Naive thymus-derived CD4-positive, alpha-beta T cell (primary cell): ENCODE measurements at regions of chr1 and their contacts with region 1.

Region 1: GRCh38 chr1:161159087-161159912 is at the start of gene USP21:
- DNase-seq: peak; percentile 86 to 93 (median 91)
- ATAC-seq: peak; percentile 95
- H3K4me3 ChIP-seq: peak within 1 kb of the TSS; percentile 68
- H3K4me3 Mint-ChIP-seq: peak within 1 kb of the TSS; percentile 88 to 94 (median 92)
- H3K27ac ChIP-seq: peak within 1 kb of the TSS; percentile 84
- H3K27ac Mint-ChIP-seq: peak within 1 kb of the TSS; percentile 89 to 97 (median 93)
- H3K4me1 ChIP-seq: peaks cover 31 to 34% of the 10 kb centered on the region in 2 donors
- H3K4me1 Mint-ChIP-seq: peaks cover 35 to 76% (median 67%) of the 10 kb centered on the region in 7 donors
- H3K27me3 ChIP-seq: no peaks in the 10 kb centered on the region
- H3K27me3 Mint-ChIP-seq: no peaks in the 10 kb centered on the region
- total RNA-seq, gene USP21: 36.0 to 66.0 (median 38.6) TPM

Region 2: DNA sequence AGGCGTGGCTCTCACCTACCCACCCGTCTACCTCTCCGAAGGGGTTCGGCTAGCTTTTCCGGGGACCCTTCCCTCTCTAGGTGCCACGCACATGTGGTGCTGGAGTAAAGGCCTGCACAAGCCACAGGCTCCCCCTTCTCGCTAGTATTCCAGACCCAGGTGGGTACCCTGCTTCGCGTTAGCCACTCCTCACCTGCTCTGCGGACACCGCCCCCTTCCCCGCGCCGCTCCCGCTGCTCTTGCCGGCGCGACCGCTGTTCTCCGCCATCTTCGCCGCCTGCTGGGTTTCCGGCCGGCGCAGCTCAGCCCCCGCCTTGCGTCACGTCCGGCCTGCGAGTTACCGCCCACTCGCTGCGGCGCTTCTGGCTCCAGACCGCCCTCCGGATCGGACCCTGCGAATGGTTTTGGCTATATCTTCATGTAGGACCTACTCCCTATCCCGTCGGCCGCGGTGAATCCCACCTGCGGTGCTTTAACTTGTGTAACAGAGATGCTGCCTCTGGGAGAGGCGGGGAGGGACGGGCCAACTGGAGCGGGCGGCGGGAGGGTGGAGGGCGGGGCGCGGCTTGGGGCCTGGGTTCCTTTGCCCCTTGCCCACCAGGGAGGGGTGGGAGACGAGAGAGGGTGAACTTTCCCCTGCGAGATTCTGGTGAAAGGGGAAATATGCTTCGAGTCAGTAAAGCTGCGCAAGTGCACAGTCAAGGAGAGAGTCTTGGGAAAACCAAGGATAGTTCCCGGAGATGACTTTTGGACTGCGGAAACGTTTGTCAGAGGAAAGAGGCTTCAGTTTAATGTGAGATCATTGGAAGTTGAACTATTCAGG is 41.3 kb before region 1 on chr1 and contains the starts of genes NIT1 and PFDN2:
- CTCF ChIA-PET with region 1: no interaction called
- POLR2A ChIA-PET with region 1: interaction called, 16 read pairs
- intact Hi-C with region 1: loop called in 1 of 2 experiments (anchors 1 kb)
- DNase-seq: peak; percentile 76 to 90 (median 85)
- ATAC-seq: peak; percentile 86
- H3K4me3 ChIP-seq: peak within 1 kb of the TSS; percentile 99
- H3K4me3 Mint-ChIP-seq: peak within 1 kb of the TSS; percentile 92 to 99 (median 95)
- H3K27ac ChIP-seq: peak within 1 kb of the TSS; percentile 92
- H3K27ac Mint-ChIP-seq: peak within 1 kb of the TSS; percentile 57 to 99 (median 93)
- H3K4me1 ChIP-seq: peaks cover 31 to 35% of the 10 kb centered on the region in 2 donors
- H3K4me1 Mint-ChIP-seq: peaks cover 44 to 82% (median 78%) of the 10 kb centered on the region in 7 donors
- H3K27me3 ChIP-seq: no peaks in the 10 kb centered on the region
- H3K27me3 Mint-ChIP-seq: no peaks in the 10 kb centered on the region
- total RNA-seq, gene NIT1: 23.3 to 49.6 (median 41.8) TPM
- total RNA-seq, gene PFDN2: 32.0 to 67.9 (median 34.0) TPM

Region 3: GRCh38 chr1:161177112-161177935 is 18.0 kb after region 1 on chr1 and contains the start of gene B4GALT3:
- CTCF ChIA-PET with region 1: interaction called, 3 read pairs
- POLR2A ChIA-PET with region 1: interaction called, 81 read pairs
- intact Hi-C with region 1: loop called in 1 of 2 experiments (anchors 2 kb)
- DNase-seq: peak; percentile 87 to 99 (median 92)
- ATAC-seq: peak; percentile 96
- H3K4me3 ChIP-seq: peak within 1 kb of the TSS; percentile 93
- H3K4me3 Mint-ChIP-seq: peak within 1 kb of the TSS; percentile 94 to 100 (median 98)
- H3K27ac ChIP-seq: peak within 1 kb of the TSS; percentile 93
- H3K27ac Mint-ChIP-seq: peak within 1 kb of the TSS; percentile 94 to 100 (median 97)
- H3K4me1 ChIP-seq: peaks cover 36 to 39% of the 10 kb centered on the region in 2 donors
- H3K4me1 Mint-ChIP-seq: peaks cover 54 to 87% (median 74%) of the 10 kb centered on the region in 7 donors
- H3K27me3 ChIP-seq: no peaks in the 10 kb centered on the region
- H3K27me3 Mint-ChIP-seq: no peaks in the 10 kb centered on the region
- total RNA-seq, gene B4GALT3: 40.5 to 83.7 (median 54.3) TPM

Region 4: DNA sequence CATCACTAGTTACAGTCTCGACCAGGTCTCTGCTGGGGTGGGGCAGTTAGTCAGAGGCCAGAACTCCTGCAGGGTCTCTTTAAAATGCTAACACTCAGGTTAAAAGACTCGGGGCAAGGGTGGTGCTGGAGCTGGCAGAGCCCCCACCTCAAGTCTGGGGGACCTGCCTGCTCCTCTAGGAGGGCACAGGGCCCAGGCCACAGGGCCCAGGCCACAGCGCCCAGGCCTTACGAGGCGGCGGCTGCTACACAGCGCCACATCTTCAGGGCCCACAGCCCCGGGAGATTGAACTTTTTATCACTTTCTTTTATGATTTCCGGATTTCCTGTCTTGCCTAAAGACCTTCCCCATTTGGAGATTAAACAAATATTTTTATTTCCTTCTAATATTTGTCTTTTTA is 140.0 kb after region 1 on chr1:
- CTCF ChIA-PET with region 1: no interaction called
- POLR2A ChIA-PET with region 1: no interaction called
- intact Hi-C with region 1: no loop called
- DNase-seq: no peak
- ATAC-seq: no peak
- H3K4me3 ChIP-seq: no peak overlapping the region
- H3K4me3 Mint-ChIP-seq: peak overlapping the region in 1 of 10 donors; percentile 29
- H3K27ac ChIP-seq: peak overlapping the region; percentile 39
- H3K27ac Mint-ChIP-seq: peak overlapping the region in 4 of 9 donors; percentile 30 to 82 (median 74)
- H3K4me1 ChIP-seq: peaks cover 7 to 13% of the 10 kb centered on the region in 2 donors
- H3K4me1 Mint-ChIP-seq: peaks cover 7 to 27% (median 21%) of the 10 kb centered on the region in 7 donors
- H3K27me3 ChIP-seq: no peaks in the 10 kb centered on the region
- H3K27me3 Mint-ChIP-seq: no peaks in the 10 kb centered on the region